Common myeloid progenitor, CD34-positive (primary cell): ENCODE measurements at regions of chr14 and their contacts with region 1.

Region 1: GRCh38 chr14:21978184-21978998 is 304.8 kb upstream of the OR4E1 start:
- DNase-seq: peak; percentile 53 to 78 (median 68)
- H3K4me3 ChIP-seq: no peak overlapping the region
- H3K27ac ChIP-seq: no peak overlapping the region
- H3K4me1 ChIP-seq: no peaks in the 10 kb centered on the region
- H3K27me3 ChIP-seq: no peaks in the 10 kb centered on the region

Region 2: GRCh38 chr14:21960636-21961035 is 17.8 kb before region 1 on chr14:
- CTCF ChIA-PET with region 1: interaction called, 11 read pairs
- POLR2A ChIA-PET with region 1: no interaction called
- DNase-seq: no peak
- H3K4me3 ChIP-seq: no peak overlapping the region
- H3K27ac ChIP-seq: no peak overlapping the region
- H3K4me1 ChIP-seq: peaks cover 0 to 2% (median 0%) of the 10 kb centered on the region in 4 experiments
- H3K27me3 ChIP-seq: no peaks in the 10 kb centered on the region

Region 3: DNA sequence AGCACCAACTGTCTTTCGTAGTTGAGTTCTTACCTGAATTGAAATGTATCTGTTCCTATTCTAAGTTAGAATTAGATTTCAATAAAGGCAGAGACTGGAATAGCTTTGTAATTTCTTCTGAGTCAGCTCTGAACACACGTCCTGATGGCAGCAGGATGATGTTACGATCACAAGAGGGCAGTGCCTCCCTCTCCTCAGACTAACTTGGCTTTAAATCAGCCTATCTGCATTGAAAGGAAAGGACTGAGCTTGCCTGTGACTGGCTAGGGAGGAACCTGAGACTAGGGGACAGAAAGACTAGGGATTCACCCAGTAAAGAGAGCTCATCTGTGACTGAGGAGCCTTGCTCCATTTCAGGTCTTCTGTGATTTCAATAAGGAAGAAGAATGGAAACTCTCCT is 18.9 kb after region 1 on chr14:
- CTCF ChIA-PET with region 1: interaction called, 108 read pairs
- POLR2A ChIA-PET with region 1: no interaction called
- DNase-seq: peak; percentile 46 to 73 (median 69)
- H3K4me3 ChIP-seq: no peak overlapping the region
- H3K27ac ChIP-seq: no peak overlapping the region
- H3K4me1 ChIP-seq: peaks cover 0 to 7% (median 3%) of the 10 kb centered on the region in 4 experiments
- H3K27me3 ChIP-seq: no peaks in the 10 kb centered on the region